MCF 10A (cell line): ENCODE measurements at regions of chr12 and their contacts with region 1.

Region 1: DNA sequence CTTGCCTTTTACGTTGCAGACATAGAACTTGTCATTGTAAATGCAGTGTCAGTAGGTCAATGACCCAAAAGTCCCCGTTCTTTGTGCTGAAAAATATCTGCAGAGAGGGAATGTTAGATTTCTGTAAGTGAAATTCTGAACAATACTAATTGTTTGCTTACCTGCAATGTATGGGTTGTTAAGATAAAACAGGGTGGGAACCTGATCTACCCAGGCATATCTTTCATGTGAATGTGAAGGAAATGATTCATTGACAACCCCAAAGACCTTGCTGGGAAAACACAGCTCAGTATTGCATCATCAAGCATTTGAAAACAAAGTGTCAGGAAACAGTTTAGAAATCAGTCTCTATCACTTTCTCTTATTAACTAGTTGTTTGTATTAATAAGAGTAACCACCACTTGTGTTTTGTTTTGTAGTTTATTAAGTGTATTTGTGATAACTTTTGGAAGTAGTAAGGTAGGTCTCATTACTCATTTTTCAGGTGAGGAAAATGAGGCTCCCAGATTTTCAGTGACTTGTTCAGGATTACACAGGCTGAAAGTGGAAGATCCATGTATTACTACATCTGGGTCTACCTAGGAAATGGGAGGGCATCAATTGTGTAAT is 57.9 kb upstream of the SLC38A2 start:
- DNase-seq: peak; percentile 93
- H3K4me3 Mint-ChIP-seq: peak overlapping the region; percentile 61
- H3K27ac Mint-ChIP-seq: peak overlapping the region; percentile 95
- H3K4me1 Mint-ChIP-seq: peaks cover 33% of the 10 kb centered on the region
- H3K27me3 Mint-ChIP-seq: no peaks in the 10 kb centered on the region
- CTCF ChIP-seq: no peak

Region 2: GRCh38 chr12:46342562-46343033 is 87.8 kb before region 1 on chr12:
- CTCF ChIA-PET with region 1: no interaction called
- POLR2A ChIA-PET with region 1: no interaction called
- intact Hi-C with region 1: no loop called
- DNase-seq: peak; percentile 63
- H3K4me3 Mint-ChIP-seq: no peak overlapping the region
- H3K27ac Mint-ChIP-seq: peak overlapping the region; percentile 81
- H3K4me1 Mint-ChIP-seq: peaks cover 14% of the 10 kb centered on the region
- H3K27me3 Mint-ChIP-seq: no peaks in the 10 kb centered on the region
- CTCF ChIP-seq: peak; percentile 31

Region 3: GRCh38 chr12:46391630-46392029 is 38.8 kb before region 1 on chr12:
- CTCF ChIA-PET with region 1: no interaction called
- POLR2A ChIA-PET with region 1: interaction called, 120 read pairs
- intact Hi-C with region 1: loop called (anchors 1 kb)
- DNase-seq: no peak
- H3K4me3 Mint-ChIP-seq: no peak overlapping the region
- H3K27ac Mint-ChIP-seq: no peak overlapping the region
- H3K4me1 Mint-ChIP-seq: peaks cover 45% of the 10 kb centered on the region
- H3K27me3 Mint-ChIP-seq: no peaks in the 10 kb centered on the region
- CTCF ChIP-seq: no peak

Region 4: DNA sequence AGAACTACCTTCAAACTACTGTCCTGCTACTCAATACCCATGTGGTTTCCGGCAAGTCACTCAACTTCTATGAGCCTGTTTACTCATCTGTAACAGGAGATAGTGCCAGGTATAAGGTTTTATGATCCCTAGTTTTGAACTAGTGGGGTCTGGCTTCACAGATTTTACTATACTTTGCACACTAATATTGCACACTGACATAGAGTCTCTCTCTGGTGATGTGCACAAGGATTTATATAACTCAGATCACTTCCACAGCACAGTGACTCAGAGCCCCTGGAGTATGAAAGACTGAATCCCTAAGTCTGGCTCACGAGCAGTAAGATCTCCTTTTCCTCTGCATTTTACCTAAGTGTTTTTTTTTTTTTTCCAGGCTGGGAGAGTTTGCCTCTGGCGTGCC is 11.8 kb after region 1 on chr12:
- CTCF ChIA-PET with region 1: interaction called, 3 read pairs
- POLR2A ChIA-PET with region 1: interaction called, 111 read pairs
- intact Hi-C with region 1: no loop called
- DNase-seq: peak; percentile 54
- H3K4me3 Mint-ChIP-seq: peak overlapping the region; percentile 28
- H3K27ac Mint-ChIP-seq: peak overlapping the region; percentile 97
- H3K4me1 Mint-ChIP-seq: peaks cover 61% of the 10 kb centered on the region
- H3K27me3 Mint-ChIP-seq: no peaks in the 10 kb centered on the region
- CTCF ChIP-seq: no peak

Region 5: DNA sequence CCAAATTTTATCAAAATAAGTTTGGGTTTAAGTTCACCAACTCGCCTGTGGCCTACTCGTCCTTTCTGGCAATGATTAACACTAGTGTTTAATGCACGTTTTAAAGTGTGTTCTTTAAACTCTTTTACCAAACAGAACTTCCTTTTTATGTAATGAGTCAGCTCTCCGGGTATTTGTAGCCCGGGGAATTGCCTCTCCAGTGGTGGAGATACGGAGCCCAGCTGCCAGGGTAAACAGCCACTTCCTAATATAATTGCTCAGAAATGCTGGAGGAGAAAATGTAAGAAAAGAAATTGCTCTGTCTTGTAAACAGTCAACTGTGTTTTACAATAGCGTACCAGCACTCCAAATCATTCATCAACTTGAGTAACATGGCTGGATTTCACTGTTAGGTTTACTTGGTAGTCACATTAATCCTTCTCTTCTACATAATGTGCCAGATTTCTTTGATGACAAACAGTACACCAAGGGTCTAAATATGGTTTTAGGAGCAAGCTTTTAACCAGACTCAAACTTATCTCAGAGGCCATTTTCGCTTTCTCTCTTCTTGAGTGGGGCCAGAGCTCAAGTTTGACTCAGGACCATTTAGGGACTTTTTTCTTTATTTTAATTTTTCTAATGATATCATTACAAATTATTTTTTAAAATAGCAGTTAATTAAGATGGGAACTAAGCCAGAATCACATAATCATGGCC is 43.3 kb after region 1 on chr12:
- CTCF ChIA-PET with region 1: no interaction called
- POLR2A ChIA-PET with region 1: interaction called, 6 read pairs
- intact Hi-C with region 1: loop called (anchors 1 kb)
- DNase-seq: peak; percentile 89
- H3K4me3 Mint-ChIP-seq: peak overlapping the region; percentile 58
- H3K27ac Mint-ChIP-seq: peak overlapping the region; percentile 94
- H3K4me1 Mint-ChIP-seq: peaks cover 44% of the 10 kb centered on the region
- H3K27me3 Mint-ChIP-seq: no peaks in the 10 kb centered on the region
- CTCF ChIP-seq: no peak

Region 6: GRCh38 chr12:46556105-46556559 is 125.7 kb after region 1 on chr12:
- CTCF ChIA-PET with region 1: no interaction called
- POLR2A ChIA-PET with region 1: interaction called, 44 read pairs
- intact Hi-C with region 1: no loop called
- DNase-seq: peak; percentile 85
- H3K4me3 Mint-ChIP-seq: peak overlapping the region; percentile 17
- H3K27ac Mint-ChIP-seq: peak overlapping the region; percentile 68
- H3K4me1 Mint-ChIP-seq: peaks cover 73% of the 10 kb centered on the region
- H3K27me3 Mint-ChIP-seq: no peaks in the 10 kb centered on the region
- CTCF ChIP-seq: no peak